PC-9 (cell line): ENCODE measurements at regions of chr16 and their contacts with region 1.

Region 1: DNA sequence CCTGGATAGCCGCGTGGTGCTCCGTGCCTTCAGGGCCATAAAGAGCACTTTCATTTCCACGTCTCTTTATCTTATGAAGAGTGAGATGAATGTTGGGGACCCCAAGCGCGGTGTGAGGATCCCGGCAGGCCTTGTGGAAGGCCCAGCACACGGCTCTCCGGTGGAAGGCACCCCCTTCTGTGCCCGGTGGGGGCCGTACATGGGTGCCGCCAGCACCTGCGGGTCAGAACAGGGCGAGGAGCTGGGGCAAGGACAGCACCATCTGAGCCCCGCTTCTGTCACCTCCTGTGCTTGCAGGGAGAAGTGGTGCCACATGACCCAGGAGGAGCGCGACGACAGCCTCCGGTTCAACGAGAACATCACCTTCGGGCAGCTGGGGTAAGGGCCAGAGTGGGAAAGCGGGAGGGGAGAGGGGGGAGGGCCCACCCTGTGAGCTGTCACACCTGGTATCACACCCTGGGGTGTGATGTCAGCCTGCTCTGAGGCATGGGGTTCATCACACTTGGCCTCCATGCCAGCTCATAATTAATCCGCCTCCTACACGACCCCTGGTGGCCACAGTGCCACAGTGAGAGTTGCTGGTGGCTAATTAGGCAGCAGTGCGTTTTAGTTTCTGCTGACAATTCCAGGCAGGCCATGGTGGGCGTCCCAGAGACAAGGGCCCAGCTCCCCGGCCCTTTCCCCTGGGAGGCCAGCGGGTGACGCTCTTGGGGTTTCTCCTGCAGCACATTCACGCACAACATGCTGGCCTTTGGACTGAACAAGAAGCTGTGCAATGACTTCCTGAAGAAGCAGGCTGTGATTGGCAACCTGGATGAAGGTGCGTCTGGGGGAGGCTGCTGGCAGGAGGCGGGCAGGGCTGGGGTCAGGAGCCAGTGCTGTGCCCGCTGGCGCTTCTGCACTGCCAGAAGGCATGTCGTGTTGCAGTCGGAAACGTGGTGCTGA is 25.7 kb downstream of the CIBAR2 start:
- DNase-seq: peak; percentile 52 to 75
- H3K4me3 ChIP-seq: no peak overlapping the region
- H3K27ac ChIP-seq: no peak overlapping the region
- H3K4me1 ChIP-seq: no peaks in the 10 kb centered on the region
- H3K27me3 ChIP-seq: 0 out of 2 replicates have a peak, but pooled peaks cover 9% of the 10 kb centered on the region
- CTCF ChIP-seq: peak; percentile 86

Region 2: DNA sequence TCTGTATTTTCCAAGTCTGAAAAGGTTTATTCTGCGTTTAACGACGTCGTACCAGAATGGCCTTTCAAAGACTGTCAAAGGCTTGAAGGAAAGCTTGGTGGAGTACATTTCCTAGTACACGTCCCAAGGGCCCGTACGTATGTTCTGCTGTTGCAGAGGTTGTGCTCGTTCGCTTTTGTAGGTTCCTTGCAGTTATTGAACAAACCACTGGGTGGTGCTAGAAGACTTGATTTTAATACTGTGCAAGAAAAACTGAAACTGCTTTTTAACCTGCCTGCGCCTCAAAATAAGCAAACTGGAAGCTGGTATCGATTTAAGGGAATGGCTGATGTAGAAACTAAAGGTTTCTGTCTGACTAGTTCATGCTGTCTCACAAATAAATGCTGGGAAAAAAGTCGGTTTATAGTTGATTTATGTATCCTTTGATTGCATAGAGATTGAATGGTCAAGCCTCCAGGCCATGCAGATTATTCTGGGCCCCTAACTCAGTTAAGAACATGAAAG is 332.2 kb before region 1 on chr16:
- CTCF ChIA-PET with region 1: no interaction called
- POLR2A ChIA-PET with region 1: no interaction called
- intact Hi-C with region 1: loop called (anchors 5 kb)
- DNase-seq: peak; percentile 61 to 75
- H3K4me3 ChIP-seq: no peak overlapping the region
- H3K27ac ChIP-seq: peak overlapping the region; percentile 22
- H3K4me1 ChIP-seq: peaks cover 11% of the 10 kb centered on the region; the same call in 1 of the 2 replicates
- H3K27me3 ChIP-seq: no peaks in the 10 kb centered on the region
- CTCF ChIP-seq: peak; percentile 92

Region 3: DNA sequence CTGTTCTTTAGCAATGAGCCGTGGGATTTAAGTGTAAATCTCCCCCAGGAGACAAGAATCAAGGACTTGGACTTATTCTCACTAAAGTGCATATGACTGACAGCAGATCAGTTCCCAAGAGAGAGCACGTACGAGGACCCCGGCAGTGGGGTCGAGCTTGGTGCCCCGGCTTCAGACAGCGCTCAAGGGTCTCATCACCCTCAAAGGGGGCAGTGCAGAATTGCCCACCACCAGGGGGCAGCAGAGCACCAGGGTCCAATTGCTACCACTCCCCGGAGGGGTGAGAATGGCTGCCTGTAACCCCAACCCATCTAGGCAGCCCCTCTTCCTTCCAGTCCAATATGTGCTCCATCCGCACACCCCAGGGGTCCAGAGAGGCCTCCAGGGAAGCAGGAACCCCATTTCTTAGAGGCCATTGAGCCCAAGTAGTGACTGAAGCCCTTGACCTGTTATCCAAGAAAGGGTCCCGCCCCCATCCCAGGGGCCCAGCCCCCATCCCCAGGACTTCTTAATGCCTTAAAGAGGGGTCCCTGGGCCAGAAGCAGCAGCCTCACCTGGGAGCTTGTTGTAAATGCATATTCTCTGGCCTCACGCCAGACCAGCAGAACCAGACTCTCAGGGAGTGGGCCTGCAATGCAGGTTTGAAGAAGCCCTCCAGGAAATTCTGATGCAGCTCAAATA is 161.4 kb before region 1 on chr16:
- CTCF ChIA-PET with region 1: interaction called, 7 read pairs
- POLR2A ChIA-PET with region 1: no interaction called
- intact Hi-C with region 1: loop called (anchors 1 kb)
- DNase-seq: peak in 1 of 2 experiments; percentile 53
- H3K4me3 ChIP-seq: no peak overlapping the region
- H3K27ac ChIP-seq: no peak overlapping the region
- H3K4me1 ChIP-seq: no peaks in the 10 kb centered on the region
- H3K27me3 ChIP-seq: no peaks in the 10 kb centered on the region
- CTCF ChIP-seq: peak; percentile 98

Region 4: GRCh38 chr16:85354686-85355514 is 268.3 kb after region 1 on chr16:
- CTCF ChIA-PET with region 1: no interaction called
- POLR2A ChIA-PET with region 1: no interaction called
- intact Hi-C with region 1: no loop called
- DNase-seq: peak; percentile 77 to 95
- H3K4me3 ChIP-seq: peak overlapping the region; percentile 27; the same call in 1 of the 2 replicates
- H3K27ac ChIP-seq: peak overlapping the region; percentile 92
- H3K4me1 ChIP-seq: peaks cover 62% of the 10 kb centered on the region
- H3K27me3 ChIP-seq: no peaks in the 10 kb centered on the region
- CTCF ChIP-seq: no peak